B cell (primary cell): ENCODE measurements at regions of chr12 and their contacts with region 1.

Region 1: GRCh38 chr12:14716848-14717444 is 20.5 kb upstream of the GUCY2C start:
- DNase-seq: peak; percentile 72
- ATAC-seq: peak; percentile 69
- H3K4me3 ChIP-seq: no peak overlapping the region
- H3K4me3 Mint-ChIP-seq: no peak overlapping the region
- H3K27ac ChIP-seq: no peak overlapping the region
- H3K27ac Mint-ChIP-seq: no peak overlapping the region
- H3K4me1 ChIP-seq: no peaks in the 10 kb centered on the region
- H3K4me1 Mint-ChIP-seq: no peaks in the 10 kb centered on the region
- H3K27me3 ChIP-seq: no peaks in the 10 kb centered on the region
- H3K27me3 Mint-ChIP-seq: peaks cover 9% of the 10 kb centered on the region
- CTCF ChIP-seq: peak; percentile 71

Region 2: GRCh38 chr12:14514154-14514842 is 202.6 kb before region 1 on chr12:
- CTCF ChIA-PET with region 1: interaction called, 4 read pairs
- POLR2A ChIA-PET with region 1: no interaction called
- intact Hi-C with region 1: loop called (anchors 1 kb)
- DNase-seq: peak; percentile 47
- ATAC-seq: peak; percentile 57
- H3K4me3 ChIP-seq: no peak overlapping the region
- H3K4me3 Mint-ChIP-seq: no peak overlapping the region
- H3K27ac ChIP-seq: no peak overlapping the region
- H3K27ac Mint-ChIP-seq: no peak overlapping the region
- H3K4me1 ChIP-seq: no peaks in the 10 kb centered on the region
- H3K4me1 Mint-ChIP-seq: no peaks in the 10 kb centered on the region
- H3K27me3 ChIP-seq: no peaks in the 10 kb centered on the region
- H3K27me3 Mint-ChIP-seq: no peaks in the 10 kb centered on the region
- CTCF ChIP-seq: peak; percentile 53

Region 3: DNA sequence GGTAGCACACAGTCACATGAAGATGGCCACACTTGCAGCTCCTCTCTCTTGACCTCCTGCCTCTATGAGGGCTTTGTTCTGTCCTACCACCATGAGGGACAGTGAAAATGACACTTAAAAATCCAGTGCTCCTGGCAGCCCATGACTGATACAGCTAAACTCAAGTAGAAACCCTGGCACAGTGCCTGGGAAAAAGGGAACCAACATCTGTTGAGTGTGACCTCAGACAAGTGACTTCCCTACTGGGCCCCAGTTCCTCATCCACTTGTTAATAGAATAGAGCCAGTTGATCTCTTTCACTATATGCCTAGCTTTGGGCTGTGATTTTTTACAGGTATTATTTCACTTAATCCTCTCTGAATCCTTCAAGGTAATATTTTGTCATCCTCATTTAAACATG is 25.4 kb before region 1 on chr12:
- CTCF ChIA-PET with region 1: no interaction called
- POLR2A ChIA-PET with region 1: no interaction called
- intact Hi-C with region 1: no loop called
- DNase-seq: peak; percentile 8
- ATAC-seq: no peak
- H3K4me3 ChIP-seq: no peak overlapping the region
- H3K4me3 Mint-ChIP-seq: no peak overlapping the region
- H3K27ac ChIP-seq: no peak overlapping the region
- H3K27ac Mint-ChIP-seq: no peak overlapping the region
- H3K4me1 ChIP-seq: no peaks in the 10 kb centered on the region
- H3K4me1 Mint-ChIP-seq: peaks cover 2% of the 10 kb centered on the region
- H3K27me3 ChIP-seq: no peaks in the 10 kb centered on the region
- H3K27me3 Mint-ChIP-seq: peaks cover 12% of the 10 kb centered on the region
- CTCF ChIP-seq: no peak